ENCODE measurements at regions of chr3 and their contacts with region 1.

Region 1: GRCh38 chr3:132405188-132405587 is 12.1 kb upstream of the DNAJC13 start:
- DNase-seq: peak; percentile 45
- H3K4me3 ChIP-seq: no peak overlapping the region
- H3K27ac ChIP-seq: peak overlapping the region; percentile 28 to 99; a peak in 3 of 4 replicates
- H3K4me1 ChIP-seq: peaks cover 0 to 17% of the 10 kb centered on the region in 2 experiments; a peak in 2 of 4 replicates
- H3K27me3 ChIP-seq: no peaks in the 10 kb centered on the region
- CTCF ChIP-seq: no peak
- EP300 ChIP-seq: peak in 1 of 2 experiments; percentile 89; a peak in 2 of 4 replicates
- RAD21 ChIP-seq: 0 out of 2 replicates have a peak, but pooled peaks have one; percentile 19

Region 2: GRCh38 chr3:132268956-132269355 is 136.2 kb before region 1 on chr3:
- CTCF ChIA-PET with region 1: no interaction called
- POLR2A ChIA-PET with region 1: no interaction called
- DNase-seq: no peak
- H3K4me3 ChIP-seq: no peak overlapping the region
- H3K27ac ChIP-seq: no peak overlapping the region
- H3K4me1 ChIP-seq: no peaks in the 10 kb centered on the region
- H3K27me3 ChIP-seq: no peaks in the 10 kb centered on the region
- CTCF ChIP-seq: peak; percentile 51
- EP300 ChIP-seq: no peak
- RAD21 ChIP-seq: 0 out of 2 replicates have a peak, but pooled peaks have one; percentile 20

Region 3: GRCh38 chr3:132416807-132417694 is 11.9 kb after region 1 on chr3 and contains the start of gene DNAJC13:
- CTCF ChIA-PET with region 1: interaction called, 3 read pairs
- POLR2A ChIA-PET with region 1: interaction called, 16 read pairs
- DNase-seq: peak; percentile 93
- H3K4me3 ChIP-seq: peak within 1 kb of the TSS; percentile 97 to 99
- H3K27ac ChIP-seq: peak within 1 kb of the TSS; percentile 90 to 94
- H3K4me1 ChIP-seq: peaks cover 6 to 7% of the 10 kb centered on the region in 2 experiments; a peak in 3 of 4 replicates
- H3K27me3 ChIP-seq: no peaks in the 10 kb centered on the region
- CTCF ChIP-seq: no peak
- EP300 ChIP-seq: no peak; a peak in 1 of 4 replicates
- RAD21 ChIP-seq: no peak
- polyA plus RNA-seq, gene DNAJC13: 10.8 and 17.3 TPM in 2 replicates

Region 4: DNA sequence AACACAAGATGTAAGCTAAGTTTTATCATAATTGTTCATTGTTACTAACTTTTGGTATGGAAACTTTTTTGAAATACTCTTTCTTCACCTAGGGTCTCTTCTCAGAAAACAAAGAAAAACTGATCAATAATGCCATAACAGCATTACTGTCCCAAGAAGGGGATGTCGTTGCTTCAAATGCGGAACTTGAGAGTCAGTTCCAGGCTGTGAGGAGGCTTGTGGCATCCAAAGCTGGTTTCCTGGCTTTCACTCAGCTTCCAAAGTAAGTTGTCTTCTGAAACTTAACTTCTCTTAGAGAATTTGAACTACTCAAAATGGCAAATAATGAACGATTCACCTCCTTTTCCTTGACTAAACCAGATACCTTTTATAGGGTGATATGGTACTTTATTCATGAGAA is 51.4 kb after region 1 on chr3:
- CTCF ChIA-PET with region 1: no interaction called
- POLR2A ChIA-PET with region 1: no interaction called
- DNase-seq: no peak
- H3K4me3 ChIP-seq: no peak overlapping the region
- H3K27ac ChIP-seq: no peak overlapping the region
- H3K4me1 ChIP-seq: no peaks in the 10 kb centered on the region
- H3K27me3 ChIP-seq: no peaks in the 10 kb centered on the region
- CTCF ChIP-seq: no peak
- EP300 ChIP-seq: no peak
- RAD21 ChIP-seq: no peak

Measured in SK-N-SH (cell line).